ENCODE measurements at regions of chr12 and their contacts with region 1.

Region 1: DNA sequence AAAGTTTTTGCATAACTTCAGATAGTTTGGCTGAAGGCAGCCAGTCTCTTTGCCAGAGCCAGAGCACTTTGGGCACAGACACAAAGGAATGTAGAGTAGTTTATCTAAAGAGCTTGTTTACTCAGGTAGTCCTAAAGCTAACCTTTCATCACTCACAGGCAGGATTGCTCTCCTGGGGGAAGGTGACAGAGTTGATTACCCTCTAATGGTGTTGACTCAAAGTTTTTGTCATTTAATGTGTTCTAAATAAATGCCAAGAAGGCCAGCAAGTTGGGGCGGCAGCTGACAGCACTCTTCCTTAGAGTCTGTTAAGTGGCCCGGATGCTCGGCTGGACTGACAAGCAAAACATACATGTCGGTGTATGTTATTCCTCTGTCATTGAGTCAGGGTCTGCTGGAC is 9.3 kb upstream of the TAS2R46 start:
- DNase-seq: no peak
- ATAC-seq: no peak
- H3K4me3 ChIP-seq: no peak overlapping the region
- H3K27ac ChIP-seq: no peak overlapping the region
- H3K4me1 ChIP-seq: no peaks in the 10 kb centered on the region
- H3K27me3 ChIP-seq: no peaks in the 10 kb centered on the region
- CTCF ChIP-seq: no peak

Region 2: DNA sequence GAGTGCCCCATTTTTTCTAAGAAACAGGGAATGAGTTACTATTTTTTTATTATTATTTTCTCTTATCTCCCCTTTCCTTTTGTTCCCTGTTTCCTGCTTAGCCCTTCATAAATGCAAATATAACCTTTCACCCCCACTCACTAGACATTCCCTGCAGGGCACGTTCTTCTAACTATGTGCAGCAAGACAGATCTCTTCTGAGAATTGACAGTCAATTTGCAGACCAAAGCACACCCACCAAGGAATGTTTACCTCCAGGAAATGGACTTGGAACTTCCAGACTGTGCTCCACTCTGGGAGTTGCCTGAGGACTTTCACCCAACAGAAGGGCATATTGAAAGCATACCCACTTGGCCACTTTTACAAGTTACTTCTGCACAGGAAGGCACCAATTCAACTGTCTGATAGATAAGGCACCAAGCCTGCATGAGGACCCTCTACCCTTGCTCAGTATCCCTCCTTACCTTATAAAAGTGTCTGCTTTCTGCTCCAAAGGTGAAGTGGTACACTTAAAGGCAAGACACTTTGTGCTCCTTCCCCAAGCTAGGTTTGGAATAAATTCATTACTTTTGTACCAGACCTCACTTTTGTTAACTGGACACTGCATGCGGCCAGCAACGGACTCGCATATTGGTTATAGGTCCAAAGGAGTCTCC is 55.5 kb before region 1 on chr12:
- CTCF ChIA-PET with region 1: no interaction called
- POLR2A ChIA-PET with region 1: no interaction called
- intact Hi-C with region 1: loop called (anchors 5 kb)
- DNase-seq: no peak
- ATAC-seq: no peak
- H3K4me3 ChIP-seq: no peak overlapping the region
- H3K27ac ChIP-seq: no peak overlapping the region
- H3K4me1 ChIP-seq: no peaks in the 10 kb centered on the region
- H3K27me3 ChIP-seq: no peaks in the 10 kb centered on the region
- CTCF ChIP-seq: no peak